GM18951 (cell line): ENCODE measurements at regions of chr16 and their contacts with region 1.

Region 1: DNA sequence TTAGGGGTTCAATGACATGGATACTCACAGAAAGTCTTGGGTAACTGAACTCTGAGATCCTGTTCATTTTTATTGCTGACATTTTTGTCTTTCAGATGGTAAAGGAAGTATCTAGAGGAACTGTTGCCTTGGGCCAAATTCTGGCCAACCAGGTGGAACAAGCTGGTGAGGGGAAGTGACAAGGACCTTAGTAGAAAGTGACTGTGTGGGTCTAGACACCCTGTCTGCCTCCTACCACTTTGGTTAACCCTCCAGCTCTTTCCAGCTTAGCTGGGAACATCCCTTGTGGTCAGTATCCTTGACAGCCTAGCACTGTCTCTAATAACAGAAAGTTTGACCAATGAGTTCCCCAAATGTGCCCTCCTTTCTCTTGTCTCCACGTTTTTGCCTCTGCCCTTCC is 28.8 kb upstream of the PRKCB start:
- POLR2A ChIP-seq: no peak

Region 2: GRCh38 chr16:23081675-23082119 is 725.3 kb before region 1 on chr16:
- in situ Hi-C with region 1: no loop called
- POLR2A ChIP-seq: no peak

Region 3: DNA sequence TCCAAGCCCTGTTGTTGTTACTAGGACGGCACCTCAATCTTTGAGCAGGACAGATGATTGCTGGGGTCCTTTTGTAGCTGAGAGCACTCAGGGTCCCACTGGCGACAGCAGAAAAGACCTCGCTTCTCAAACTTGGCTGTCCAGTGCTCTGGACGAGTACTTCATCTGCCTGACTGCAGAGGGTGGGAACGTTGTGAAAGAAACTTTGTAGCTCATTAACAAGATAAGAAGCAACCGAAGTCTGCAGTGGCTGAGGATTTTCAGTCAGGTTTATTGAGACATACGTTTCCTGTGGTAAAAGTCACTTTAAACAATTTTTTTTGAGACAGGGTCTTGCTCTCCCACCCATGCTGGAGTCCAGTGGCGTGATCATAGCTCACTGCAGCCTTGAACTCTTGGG is 220.4 kb after region 1 on chr16:
- in situ Hi-C with region 1: loop called (anchors 5 kb)
- POLR2A ChIP-seq: no peak